PC-9 (cell line): ENCODE measurements at regions of chr18 and their contacts with region 1.

Region 1: DNA sequence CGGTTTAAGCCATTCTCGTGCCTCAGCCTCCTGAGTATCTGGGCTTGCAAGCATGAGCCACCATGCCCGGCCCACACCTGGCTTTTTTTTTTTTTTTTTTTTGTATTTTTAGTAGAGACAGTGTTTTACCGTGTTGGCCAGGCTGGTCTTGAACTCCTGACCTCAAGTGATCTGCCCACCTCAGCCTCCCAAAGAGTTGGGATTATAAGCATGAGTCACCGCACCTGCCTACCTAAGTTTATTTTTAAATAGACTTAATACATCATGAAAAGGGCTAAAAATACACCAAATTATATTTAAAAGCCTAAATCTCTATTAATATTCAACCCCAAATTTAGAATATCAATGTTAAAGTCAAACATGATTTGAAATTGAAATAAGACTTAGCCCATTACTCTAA is 250.8 kb upstream of the MC4R start:
- DNase-seq: no peak
- H3K4me3 ChIP-seq: no peak overlapping the region
- H3K27ac ChIP-seq: no peak overlapping the region
- H3K4me1 ChIP-seq: no peaks in the 10 kb centered on the region
- H3K27me3 ChIP-seq: no peaks in the 10 kb centered on the region
- CTCF ChIP-seq: no peak

Region 2: GRCh38 chr18:60202708-60203107 is 420.6 kb before region 1 on chr18:
- CTCF ChIA-PET with region 1: no interaction called
- POLR2A ChIA-PET with region 1: interaction called, 10 read pairs
- intact Hi-C with region 1: no loop called
- DNase-seq: no peak
- H3K4me3 ChIP-seq: no peak overlapping the region
- H3K27ac ChIP-seq: no peak overlapping the region
- H3K4me1 ChIP-seq: no peaks in the 10 kb centered on the region
- H3K27me3 ChIP-seq: no peaks in the 10 kb centered on the region
- CTCF ChIP-seq: no peak

Region 3: GRCh38 chr18:60966876-60967275 is 343.5 kb after region 1 on chr18:
- CTCF ChIA-PET with region 1: no interaction called
- POLR2A ChIA-PET with region 1: no interaction called
- intact Hi-C with region 1: no loop called
- DNase-seq: no peak
- H3K4me3 ChIP-seq: no peak overlapping the region
- H3K27ac ChIP-seq: no peak overlapping the region
- H3K4me1 ChIP-seq: no peaks in the 10 kb centered on the region
- H3K27me3 ChIP-seq: no peaks in the 10 kb centered on the region
- CTCF ChIP-seq: no peak